Head of caudate nucleus (tissue), 42 donors: ENCODE measurements at regions of chr6 and their contacts with region 1.

Region 1: GRCh38 chr6:75208298-75209183 is 2.7 kb upstream of the COL12A1 start:
- DNase-seq: peak; percentile 76 to 95 (median 89)

Region 2: GRCh38 chr6:73739096-73739495 is 1469.4 kb before region 1 on chr6:
- intact Hi-C with region 1: loop called (anchors 5 kb)
- DNase-seq: peak in 4 of 42 donors; percentile 5 to 62 (median 14)

Region 3: DNA sequence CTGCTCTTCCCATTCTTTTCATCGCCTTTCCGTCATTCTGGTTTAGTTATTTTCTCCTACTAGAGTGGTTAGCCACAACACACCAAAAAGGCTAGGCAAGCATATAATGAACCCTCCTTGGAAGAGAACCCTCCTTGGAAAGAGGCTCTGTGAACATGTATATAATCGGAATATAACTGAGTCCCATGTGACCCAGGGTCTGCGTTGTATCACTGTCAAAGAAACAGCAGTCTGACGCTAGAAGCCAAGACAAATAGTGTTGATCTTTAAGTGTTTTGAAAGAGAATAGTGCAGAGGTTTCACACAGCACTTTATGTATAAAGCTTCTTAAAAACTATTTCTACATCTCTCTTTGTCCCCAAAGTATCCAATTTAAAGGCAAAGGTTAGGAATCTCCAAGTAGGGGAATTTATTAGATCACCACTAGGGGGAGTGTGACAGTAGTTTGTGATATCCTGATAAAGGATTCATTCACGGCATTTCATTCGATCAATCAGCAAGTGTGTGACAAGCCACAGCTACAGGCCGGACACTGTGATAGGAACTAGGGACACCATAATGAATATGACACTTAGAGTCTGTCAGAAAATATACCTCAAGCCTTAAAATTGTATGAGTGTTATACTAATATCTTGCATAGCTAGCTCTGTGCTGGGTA is 1117.3 kb before region 1 on chr6:
- intact Hi-C with region 1: loop called (anchors 5 kb)
- DNase-seq: peak in 4 of 42 donors; percentile 10 to 28 (median 16)